MCF 10A (cell line): ENCODE measurements at regions of chr11 and their contacts with region 1.

Region 1: GRCh38 chr11:29507376-29507775 is 509.5 kb downstream of the KCNA4 start:
- DNase-seq: no peak
- H3K4me3 Mint-ChIP-seq: no peak overlapping the region
- H3K27ac Mint-ChIP-seq: no peak overlapping the region
- H3K4me1 Mint-ChIP-seq: no peaks in the 10 kb centered on the region
- H3K27me3 Mint-ChIP-seq: no peaks in the 10 kb centered on the region
- CTCF ChIP-seq: no peak

Region 2: DNA sequence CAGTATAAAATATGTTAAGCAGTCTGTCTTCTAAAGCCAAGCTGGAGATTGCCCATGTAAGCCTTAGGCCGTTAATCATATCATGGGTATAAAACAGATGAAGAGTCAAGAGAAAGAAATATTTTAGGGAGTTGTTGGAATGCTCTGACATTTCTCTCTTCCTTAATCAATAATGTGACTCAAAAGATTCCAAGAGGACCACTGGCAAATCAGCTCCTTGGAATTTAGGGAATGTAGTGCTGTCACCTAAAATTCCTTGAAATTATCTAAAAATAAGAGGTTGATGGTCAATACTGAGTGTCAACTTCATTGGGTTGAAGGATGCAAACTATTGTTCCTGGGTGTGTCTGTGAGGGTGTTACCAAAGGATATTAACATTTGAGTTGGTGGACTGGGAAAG is 16.4 kb before region 1 on chr11:
- CTCF ChIA-PET with region 1: no interaction called
- POLR2A ChIA-PET with region 1: interaction called, 10 read pairs
- intact Hi-C with region 1: no loop called
- DNase-seq: no peak
- H3K4me3 Mint-ChIP-seq: no peak overlapping the region
- H3K27ac Mint-ChIP-seq: no peak overlapping the region
- H3K4me1 Mint-ChIP-seq: no peaks in the 10 kb centered on the region
- H3K27me3 Mint-ChIP-seq: no peaks in the 10 kb centered on the region
- CTCF ChIP-seq: no peak